Natural killer cell (primary cell): ENCODE measurements at regions of chr17 and their contacts with region 1.

Region 1: GRCh38 chr17:37609170-37610040 is at the start of gene SYNRG:
- DNase-seq: peak; percentile 98
- ATAC-seq: peak; percentile 87 to 96 (median 90)
- H3K4me3 ChIP-seq: peak within 1 kb of the TSS; percentile 99
- H3K4me3 Mint-ChIP-seq: peak within 1 kb of the TSS; percentile 89
- H3K27ac ChIP-seq: peak within 1 kb of the TSS; percentile 93
- H3K27ac Mint-ChIP-seq: peak within 1 kb of the TSS; percentile 94 to 95
- H3K4me1 ChIP-seq: peaks cover 25% of the 10 kb centered on the region
- H3K4me1 Mint-ChIP-seq: peaks cover 46 to 47% of the 10 kb centered on the region in 2 donors
- H3K27me3 ChIP-seq: no peaks in the 10 kb centered on the region
- H3K27me3 Mint-ChIP-seq: no peaks in the 10 kb centered on the region
- CTCF ChIP-seq: peak; percentile 53
- total RNA-seq, gene SYNRG: 82.1 to 137 (median 88.2) TPM

Region 2: DNA sequence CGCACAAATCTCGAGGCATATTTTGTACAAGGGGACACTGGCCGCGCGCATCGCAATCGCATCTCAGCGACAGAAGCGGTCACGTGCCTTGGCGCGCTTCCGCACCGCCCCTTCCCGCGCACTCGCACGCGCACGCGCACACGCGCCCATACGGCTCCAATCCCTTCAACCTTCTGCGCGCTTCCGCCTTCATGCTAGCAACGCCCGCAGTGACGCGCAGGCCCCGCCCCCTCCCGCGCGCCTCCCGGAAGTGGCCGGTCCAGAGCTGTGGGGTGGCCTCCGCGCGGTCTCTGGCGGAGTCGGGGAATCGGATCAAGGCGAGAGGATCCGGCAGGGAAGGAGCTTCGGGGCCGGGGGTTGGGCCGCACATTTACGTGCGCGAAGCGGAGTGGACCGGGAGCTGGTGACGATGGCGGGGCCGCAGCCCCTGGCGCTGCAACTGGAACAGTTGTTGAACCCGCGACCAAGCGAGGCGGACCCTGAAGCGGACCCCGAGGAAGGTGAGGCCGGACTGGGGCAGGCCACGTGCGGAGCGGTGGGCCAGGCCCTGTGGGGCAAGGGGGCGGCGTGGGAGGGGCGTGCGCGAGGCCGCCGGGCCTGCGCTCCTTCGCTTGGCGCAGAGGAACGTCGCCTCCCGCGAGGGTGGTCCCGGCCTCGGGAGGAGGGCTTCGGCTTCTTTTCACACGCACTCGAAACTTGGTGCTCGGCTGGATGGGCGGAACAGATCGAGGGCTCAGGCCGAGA is 660.5 kb before region 1 on chr17 and contains the start of gene AATF:
- intact Hi-C with region 1: loop called (anchors 5 kb)
- DNase-seq: peak; percentile 99
- ATAC-seq: peak; percentile 96 to 98 (median 97)
- H3K4me3 ChIP-seq: peak within 1 kb of the TSS; percentile 93
- H3K4me3 Mint-ChIP-seq: peak within 1 kb of the TSS; percentile 100
- H3K27ac ChIP-seq: peak within 1 kb of the TSS; percentile 88
- H3K27ac Mint-ChIP-seq: peak within 1 kb of the TSS; percentile 95 to 96
- H3K4me1 ChIP-seq: peaks cover 21% of the 10 kb centered on the region
- H3K4me1 Mint-ChIP-seq: peaks cover 53% of the 10 kb centered on the region in 2 donors
- H3K27me3 ChIP-seq: peaks cover 38% of the 10 kb centered on the region
- H3K27me3 Mint-ChIP-seq: peaks cover 28 to 32% of the 10 kb centered on the region in 2 donors
- CTCF ChIP-seq: no peak
- total RNA-seq, gene AATF: 60.1 to 67.2 (median 63.2) TPM

Region 3: DNA sequence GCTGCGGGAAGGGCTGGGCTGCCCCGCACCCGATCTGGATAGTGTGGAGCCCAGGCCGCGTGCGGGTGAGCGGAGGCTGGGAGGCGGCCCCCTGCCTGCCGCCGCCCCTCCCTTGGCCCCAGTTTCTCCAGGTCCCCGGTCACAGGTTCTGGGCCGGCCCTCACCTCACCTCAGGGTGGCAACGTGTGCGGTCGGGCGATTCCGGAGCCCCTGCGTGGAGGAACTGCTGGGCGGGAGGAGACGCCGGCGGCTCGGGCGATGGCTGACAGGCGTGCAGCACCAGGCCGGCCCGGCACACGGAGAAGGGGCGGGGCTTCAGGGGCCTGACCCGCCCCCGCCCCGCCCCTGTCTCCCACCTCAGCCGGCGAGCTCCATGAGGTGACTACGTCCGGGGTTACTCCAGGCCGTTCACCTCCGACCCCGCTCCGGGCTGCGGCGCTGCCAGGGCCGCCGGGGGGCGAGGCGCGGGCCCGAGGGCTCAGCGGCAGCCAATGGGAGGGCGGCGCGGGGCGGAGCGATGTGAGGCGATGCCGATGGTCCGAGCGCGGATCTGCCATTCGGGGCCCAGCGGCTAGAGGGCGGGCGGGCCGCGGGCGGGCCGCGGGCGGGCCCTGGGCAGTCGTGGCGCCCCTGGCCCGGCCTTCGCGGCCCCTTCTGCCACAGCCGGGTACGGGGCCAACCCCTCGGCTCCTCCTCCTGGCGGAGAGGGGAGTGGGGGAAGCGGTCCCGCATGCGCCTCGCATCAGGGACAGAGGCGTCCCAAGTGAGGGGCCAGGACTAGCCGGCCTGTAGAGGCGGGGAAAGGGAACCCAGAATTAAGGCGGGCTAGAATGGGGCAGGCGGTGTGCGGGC is 250.3 kb before region 1 on chr17:
- intact Hi-C with region 1: loop called (anchors 1 kb)
- DNase-seq: peak; percentile 94 to 95
- ATAC-seq: peak; percentile 92 to 98 (median 92)
- H3K4me3 ChIP-seq: peak overlapping the region; percentile 72
- H3K4me3 Mint-ChIP-seq: peak overlapping the region; percentile 83
- H3K27ac ChIP-seq: peak overlapping the region; percentile 77
- H3K27ac Mint-ChIP-seq: peak overlapping the region; percentile 81 to 85
- H3K4me1 ChIP-seq: peaks cover 16% of the 10 kb centered on the region
- H3K4me1 Mint-ChIP-seq: peaks cover 19% of the 10 kb centered on the region in 2 donors
- H3K27me3 ChIP-seq: no peaks in the 10 kb centered on the region
- H3K27me3 Mint-ChIP-seq: no peaks in the 10 kb centered on the region
- CTCF ChIP-seq: peak; percentile 39

Region 4: GRCh38 chr17:37399404-37399803 is 210.0 kb before region 1 on chr17:
- intact Hi-C with region 1: no loop called
- DNase-seq: no peak
- ATAC-seq: no peak
- H3K4me3 ChIP-seq: no peak overlapping the region
- H3K4me3 Mint-ChIP-seq: no peak overlapping the region
- H3K27ac ChIP-seq: no peak overlapping the region
- H3K27ac Mint-ChIP-seq: no peak overlapping the region
- H3K4me1 ChIP-seq: no peaks in the 10 kb centered on the region
- H3K4me1 Mint-ChIP-seq: peaks cover 4% of the 10 kb centered on the region in 2 donors
- H3K27me3 ChIP-seq: no peaks in the 10 kb centered on the region
- H3K27me3 Mint-ChIP-seq: no peaks in the 10 kb centered on the region
- CTCF ChIP-seq: no peak

Region 5: GRCh38 chr17:37489197-37490001 is 120.0 kb before region 1 on chr17 and contains the start of gene DUSP14:
- intact Hi-C with region 1: loop called (anchors 1 kb)
- DNase-seq: peak; percentile 74 to 94
- ATAC-seq: peak; percentile 78 to 91 (median 81)
- H3K4me3 ChIP-seq: peak within 1 kb of the TSS; percentile 81
- H3K4me3 Mint-ChIP-seq: peak within 1 kb of the TSS; percentile 97
- H3K27ac ChIP-seq: peak within 1 kb of the TSS; percentile 63
- H3K27ac Mint-ChIP-seq: peak within 1 kb of the TSS; percentile 88 to 90
- H3K4me1 ChIP-seq: peaks cover 21% of the 10 kb centered on the region
- H3K4me1 Mint-ChIP-seq: peaks cover 20 to 31% of the 10 kb centered on the region in 2 donors
- H3K27me3 ChIP-seq: no peaks in the 10 kb centered on the region
- H3K27me3 Mint-ChIP-seq: peaks cover 0 to 3% of the 10 kb centered on the region in 2 donors
- CTCF ChIP-seq: no peak
- total RNA-seq, gene DUSP14: 5.0 to 9.1 (median 5.3) TPM

Region 6: GRCh38 chr17:37546302-37546701 is 63.1 kb before region 1 on chr17:
- intact Hi-C with region 1: loop called (anchors 5 kb)
- DNase-seq: no peak
- ATAC-seq: no peak
- H3K4me3 ChIP-seq: no peak overlapping the region
- H3K4me3 Mint-ChIP-seq: no peak overlapping the region
- H3K27ac ChIP-seq: no peak overlapping the region
- H3K27ac Mint-ChIP-seq: peak overlapping the region; percentile 37 to 67
- H3K4me1 ChIP-seq: no peaks in the 10 kb centered on the region
- H3K4me1 Mint-ChIP-seq: peaks cover 27 to 33% of the 10 kb centered on the region in 2 donors
- H3K27me3 ChIP-seq: no peaks in the 10 kb centered on the region
- H3K27me3 Mint-ChIP-seq: no peaks in the 10 kb centered on the region
- CTCF ChIP-seq: no peak

Region 7: GRCh38 chr17:37643118-37643766 is 33.8 kb after region 1 on chr17 and contains the start of gene DDX52:
- intact Hi-C with region 1: loop called (anchors 2 kb)
- DNase-seq: peak; percentile 83 to 96
- ATAC-seq: peak; percentile 97 to 99 (median 99)
- H3K4me3 ChIP-seq: peak within 1 kb of the TSS; percentile 100
- H3K4me3 Mint-ChIP-seq: peak within 1 kb of the TSS; percentile 96
- H3K27ac ChIP-seq: peak within 1 kb of the TSS; percentile 75
- H3K27ac Mint-ChIP-seq: peak within 1 kb of the TSS; percentile 89 to 90
- H3K4me1 ChIP-seq: peaks cover 6% of the 10 kb centered on the region
- H3K4me1 Mint-ChIP-seq: peaks cover 32 to 35% of the 10 kb centered on the region in 2 donors
- H3K27me3 ChIP-seq: peaks cover 4% of the 10 kb centered on the region
- H3K27me3 Mint-ChIP-seq: peaks cover 22 to 28% of the 10 kb centered on the region in 2 donors
- CTCF ChIP-seq: no peak
- total RNA-seq, gene DDX52: 39.1 to 47.5 (median 41.9) TPM